Left colon (tissue), 2 donors: ENCODE measurements at regions of chr3 and their contacts with region 1.

Region 1: DNA sequence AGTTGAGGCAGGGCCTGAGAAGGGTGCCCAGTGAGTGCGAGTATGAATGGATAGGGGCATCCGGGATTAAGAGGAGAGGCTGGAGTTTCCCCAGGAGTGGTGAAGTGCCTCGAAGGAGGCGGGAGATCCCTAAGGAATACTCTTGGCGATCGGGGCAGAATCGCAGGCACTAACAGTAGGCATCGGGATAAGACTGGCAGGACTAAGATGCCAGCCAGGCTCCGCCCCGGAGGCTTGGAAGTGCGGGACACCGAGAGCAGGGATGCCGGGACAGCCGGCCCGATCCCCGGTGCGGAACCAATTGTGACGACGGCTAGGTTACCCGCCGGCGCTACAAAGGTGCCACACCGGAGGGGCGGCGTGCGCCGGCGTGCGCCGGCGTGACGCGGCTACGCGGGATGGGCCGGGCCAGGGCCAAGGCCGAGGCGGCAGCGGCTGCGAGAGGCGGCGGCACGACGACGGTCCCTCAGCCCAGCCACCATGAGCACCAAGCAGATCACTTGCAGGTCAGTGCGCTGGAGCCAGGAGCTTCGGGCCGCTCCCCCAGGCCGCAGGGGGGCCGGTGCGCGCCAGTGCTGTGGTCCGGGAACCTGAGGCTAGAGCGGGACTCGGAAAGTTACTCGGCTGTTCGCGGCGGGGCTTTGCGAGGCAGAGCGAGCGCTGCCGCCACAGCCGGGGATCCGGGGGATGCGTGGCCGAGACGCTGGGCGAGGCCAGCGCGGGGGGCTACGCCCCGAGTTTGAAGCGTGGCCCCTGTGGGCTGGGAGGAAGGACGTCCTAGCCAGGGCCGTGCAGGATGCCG is at the start of gene MKRN2:
- DNase-seq: peak; percentile 87 to 88
- ATAC-seq: peak; percentile 92
- total RNA-seq, gene MKRN2: 17.2 to 21.6 TPM

Region 2: GRCh38 chr3:10744098-10744465 is 1812.8 kb before region 1 on chr3:
- intact Hi-C with region 1: loop called in 1 of 2 experiments (anchors 10 kb)
- DNase-seq: no peak
- ATAC-seq: peak; percentile 28

Region 3: GRCh38 chr3:12663936-12664908 is 107.3 kb after region 1 on chr3 and contains the start of gene RAF1:
- intact Hi-C with region 1: loop called in 1 of 2 experiments (anchors 5 kb)
- DNase-seq: peak; percentile 98
- ATAC-seq: peak; percentile 93
- total RNA-seq, gene RAF1: 75.3 to 80.5 TPM